Ascending aorta (tissue), 2 donors: ENCODE measurements at regions of chr15 and their contacts with region 1.

Region 1: GRCh38 chr15:74540761-74541493 is at the start of gene ARID3B:
- DNase-seq: peak; percentile 92 to 98
- H3K4me3 ChIP-seq: peak within 1 kb of the TSS; percentile 96 to 98
- H3K27ac ChIP-seq: peak within 1 kb of the TSS; percentile 80 to 90
- H3K4me1 ChIP-seq: peaks cover 4 to 16% of the 10 kb centered on the region in 2 donors
- H3K27me3 ChIP-seq: no peaks in the 10 kb centered on the region
- CTCF ChIP-seq: no peak
- total RNA-seq, gene ARID3B: 13.3 TPM

Region 2: DNA sequence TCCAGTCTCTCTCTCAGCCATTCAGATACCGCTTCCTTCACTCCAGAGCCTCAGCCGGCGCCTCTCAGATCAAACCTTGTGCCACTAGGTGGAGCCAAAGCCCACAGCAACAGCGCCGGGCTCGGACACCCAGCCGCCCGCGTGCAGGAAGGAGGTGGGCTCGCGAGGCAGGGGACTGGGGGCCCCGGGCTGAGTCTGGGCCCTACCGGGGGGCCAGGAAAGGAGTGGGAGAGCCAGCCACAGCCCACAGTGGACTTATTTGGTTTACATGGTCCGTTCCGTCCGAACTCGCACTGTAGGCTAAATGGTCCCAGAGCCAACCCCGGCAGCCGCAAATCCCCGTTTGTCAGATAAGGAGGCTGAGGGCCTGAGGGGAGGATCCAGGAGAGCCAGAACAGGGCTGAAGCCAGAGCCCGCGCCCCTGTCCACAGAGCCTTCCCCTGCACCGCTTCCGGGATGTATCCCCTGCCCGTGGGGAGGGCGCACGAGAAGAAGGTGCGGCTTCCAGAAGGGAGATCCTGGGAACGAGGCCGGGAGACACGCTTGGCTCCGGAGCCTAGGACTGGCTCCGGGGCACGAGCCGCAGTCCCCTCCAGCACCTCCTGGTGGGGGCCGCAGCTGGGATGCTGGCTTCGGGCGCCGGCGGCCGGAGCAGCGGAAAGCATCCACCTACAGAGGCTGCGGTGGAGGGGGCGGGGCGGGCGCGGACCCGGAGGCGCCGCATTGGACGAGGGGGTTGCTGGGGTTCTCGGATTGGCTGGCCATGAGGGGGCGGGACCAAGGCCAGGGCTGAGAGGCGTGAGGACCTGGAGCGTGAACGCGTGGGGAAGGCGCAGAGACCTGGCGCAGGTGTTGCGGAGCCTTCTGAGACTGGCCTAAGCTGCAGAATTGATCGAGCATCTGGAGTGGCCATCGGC is 166.9 kb before region 1 on chr15:
- intact Hi-C with region 1: loop called (anchors 5 kb)
- DNase-seq: peak; percentile 75 to 96
- H3K4me3 ChIP-seq: peak overlapping the region; percentile 63 to 84
- H3K27ac ChIP-seq: peak overlapping the region; percentile 22 to 34
- H3K4me1 ChIP-seq: peaks cover 4 to 12% of the 10 kb centered on the region in 2 donors
- H3K27me3 ChIP-seq: no peaks in the 10 kb centered on the region
- CTCF ChIP-seq: peak; percentile 82 to 90 (median 87)

Region 3: DNA sequence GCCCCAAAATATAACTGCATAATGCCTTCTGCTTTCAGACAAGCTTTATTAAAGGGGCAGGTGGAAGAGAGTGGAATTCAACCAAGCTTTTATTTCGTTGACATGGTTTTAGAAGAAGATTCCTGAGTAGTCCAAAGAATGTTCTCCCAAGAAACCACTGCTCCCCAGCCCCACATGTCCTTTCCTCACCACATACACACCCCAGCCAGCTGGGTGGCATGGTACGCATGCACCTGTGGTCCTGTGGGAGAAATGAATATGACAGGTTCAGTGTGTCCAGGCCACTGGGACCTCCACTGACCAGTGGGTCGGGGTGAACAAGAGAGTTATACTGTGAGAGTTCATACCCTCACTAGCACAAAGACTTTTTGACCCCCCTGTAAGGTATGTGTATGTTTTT is 30.3 kb after region 1 on chr15:
- intact Hi-C with region 1: loop called (anchors 1 kb)
- DNase-seq: no peak
- H3K4me3 ChIP-seq: no peak overlapping the region
- H3K27ac ChIP-seq: peak overlapping the region; percentile 65 to 90
- H3K4me1 ChIP-seq: peaks cover 2 to 20% of the 10 kb centered on the region in 2 donors
- H3K27me3 ChIP-seq: no peaks in the 10 kb centered on the region
- CTCF ChIP-seq: no peak

Region 4: DNA sequence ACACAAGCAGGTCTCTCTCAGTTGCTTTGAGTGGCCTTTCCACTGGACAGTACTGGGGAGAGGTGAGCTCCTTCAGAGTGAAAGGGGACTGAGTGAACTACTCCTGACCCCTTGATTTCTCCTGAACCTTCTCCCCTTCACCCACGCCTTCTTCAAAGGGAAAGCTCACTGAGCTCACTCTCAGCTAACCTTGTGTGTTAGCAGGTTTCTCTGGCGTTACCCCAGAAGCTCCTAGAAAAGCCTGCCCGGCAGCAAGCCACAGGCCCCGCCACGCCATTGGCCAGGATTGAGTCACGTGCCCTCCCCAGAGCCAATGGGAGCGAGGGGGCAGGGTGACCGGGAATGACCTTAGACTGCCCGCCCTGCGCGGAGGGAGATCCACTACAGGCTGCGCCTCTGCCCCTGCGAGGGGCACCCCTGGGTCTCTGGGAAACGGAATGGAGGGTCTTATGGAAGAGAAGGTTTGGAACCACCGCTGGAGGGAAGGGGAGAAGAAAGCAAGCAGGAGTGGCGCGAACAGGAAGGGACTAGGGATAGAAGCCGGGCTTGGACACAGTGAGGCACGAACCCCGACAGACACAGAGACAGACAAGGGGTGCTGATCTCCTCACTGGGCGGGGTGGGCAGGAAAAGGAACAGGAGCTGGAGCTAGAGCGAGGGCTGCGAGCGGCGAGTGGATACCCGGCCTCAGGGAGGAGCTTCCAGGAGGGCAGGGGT is 57.4 kb after region 1 on chr15:
- intact Hi-C with region 1: loop called (anchors 1 kb)
- DNase-seq: peak; percentile 79 to 95
- H3K4me3 ChIP-seq: peak overlapping the region; percentile 50 to 76
- H3K27ac ChIP-seq: peak overlapping the region; percentile 48 to 77
- H3K4me1 ChIP-seq: peaks cover 0 to 6% of the 10 kb centered on the region in 2 donors
- H3K27me3 ChIP-seq: no peaks in the 10 kb centered on the region
- CTCF ChIP-seq: no peak

Region 5: GRCh38 chr15:74695597-74696397 is 154.9 kb after region 1 on chr15 and contains the start of gene EDC3:
- intact Hi-C with region 1: loop called (anchors 1 kb)
- DNase-seq: peak; percentile 35 to 92
- H3K4me3 ChIP-seq: peak within 1 kb of the TSS; percentile 85 to 90
- H3K27ac ChIP-seq: peak within 1 kb of the TSS; percentile 88 to 91
- H3K4me1 ChIP-seq: peaks cover 7 to 15% of the 10 kb centered on the region in 2 donors
- H3K27me3 ChIP-seq: no peaks in the 10 kb centered on the region
- CTCF ChIP-seq: no peak
- total RNA-seq, gene EDC3: 8.8 TPM

Region 6: GRCh38 chr15:74956648-74957300 is 415.8 kb after region 1 on chr15 and contains the start of gene RPP25:
- intact Hi-C with region 1: loop called (anchors 5 kb)
- DNase-seq: peak; percentile 36 to 89
- H3K4me3 ChIP-seq: peak within 1 kb of the TSS; percentile 71 to 84
- H3K27ac ChIP-seq: peak within 1 kb of the TSS; percentile 91 to 94
- H3K4me1 ChIP-seq: peaks cover 7 to 16% of the 10 kb centered on the region in 2 donors
- H3K27me3 ChIP-seq: no peaks in the 10 kb centered on the region
- CTCF ChIP-seq: no peak
- total RNA-seq, gene RPP25: 28.4 TPM